ENCODE measurements at regions of chr1 and their contacts with region 1.

Region 1: GRCh38 chr1:110460253-110461220 is 9.6 kb downstream of the PROK1 start:
- DNase-seq: peak; percentile 62
- H3K4me3 ChIP-seq: no peak overlapping the region
- H3K27ac ChIP-seq: no peak overlapping the region
- H3K4me1 ChIP-seq: peaks cover 22% of the 10 kb centered on the region
- H3K27me3 ChIP-seq: no peaks in the 10 kb centered on the region
- CTCF ChIP-seq: peak; percentile 98 to 99

Region 2: DNA sequence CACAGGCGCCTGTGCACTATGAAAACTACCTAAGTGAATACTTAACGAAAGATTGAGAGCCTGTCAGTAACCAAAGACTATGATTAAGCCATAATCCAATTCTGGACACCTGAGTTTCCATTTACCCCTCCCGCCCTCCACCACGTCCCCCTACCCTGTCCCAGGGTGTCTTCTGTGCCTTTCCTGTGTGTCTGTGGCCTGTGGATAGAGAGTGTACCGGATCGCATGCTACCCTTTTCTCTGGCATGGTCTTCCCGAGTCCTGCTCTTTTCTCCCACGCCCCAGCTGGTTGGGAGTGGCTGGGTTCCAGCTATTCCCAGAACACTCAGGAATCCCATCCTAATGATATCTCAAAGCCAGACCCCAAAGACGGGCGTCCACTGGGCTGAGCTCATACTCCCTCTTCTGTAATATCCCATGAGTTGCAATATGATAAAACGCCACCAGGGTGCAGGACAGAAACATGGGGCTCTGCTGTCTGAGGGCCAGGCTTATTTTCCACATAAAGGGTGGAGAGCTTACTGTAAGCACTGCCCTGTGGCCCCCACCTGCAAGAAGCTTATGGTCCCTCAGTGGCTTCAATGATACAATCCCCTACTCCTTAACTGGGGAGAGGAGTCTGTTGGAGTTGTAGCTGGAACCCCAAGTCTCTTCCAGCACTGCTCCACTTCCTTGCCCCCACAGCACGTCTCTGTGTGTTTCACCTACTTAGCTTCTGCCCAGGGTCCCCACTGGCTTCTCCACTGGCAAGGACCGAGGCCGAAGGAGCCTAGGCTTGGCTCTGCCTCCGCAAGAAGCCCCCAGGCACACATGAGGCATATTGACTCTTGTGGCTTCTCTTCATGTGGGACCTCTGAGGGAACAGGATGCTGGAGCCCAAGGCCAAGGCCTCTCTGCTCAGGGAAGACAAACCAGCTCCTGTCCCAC is 372.5 kb before region 1 on chr1:
- CTCF ChIA-PET with region 1: no interaction called
- dilution Hi-C with region 1: no loop called
- in situ Hi-C with region 1: no loop called
- intact Hi-C with region 1: loop called (anchors 1 kb)
- DNase-seq: peak; percentile 31
- H3K4me3 ChIP-seq: no peak overlapping the region
- H3K27ac ChIP-seq: no peak overlapping the region
- H3K4me1 ChIP-seq: no peaks in the 10 kb centered on the region
- H3K27me3 ChIP-seq: peaks cover 22% of the 10 kb centered on the region
- CTCF ChIP-seq: peak; percentile 69

Region 3: DNA sequence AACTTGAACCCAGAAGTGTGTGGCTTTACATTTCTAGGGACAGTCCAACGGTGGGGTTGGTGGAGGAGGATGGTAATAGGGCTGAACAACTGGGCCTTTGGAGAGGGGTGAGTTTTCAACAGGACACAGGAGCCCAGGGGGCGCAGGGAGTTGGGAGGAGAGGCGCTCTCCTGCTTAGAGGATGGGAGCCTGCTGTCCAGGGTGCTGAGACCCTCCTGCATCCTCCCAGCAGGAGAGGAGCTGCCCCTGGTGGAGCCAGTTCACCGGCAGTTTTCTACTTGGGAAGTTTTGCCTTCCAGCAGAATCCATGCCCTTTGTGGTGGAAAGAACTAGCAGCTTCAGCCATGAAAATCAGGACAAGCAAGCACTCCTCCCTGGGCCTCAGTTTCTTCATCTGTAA is 241.8 kb before region 1 on chr1:
- CTCF ChIA-PET with region 1: no interaction called
- dilution Hi-C with region 1: no loop called
- in situ Hi-C with region 1: no loop called
- intact Hi-C with region 1: no loop called
- DNase-seq: no peak
- H3K4me3 ChIP-seq: no peak overlapping the region
- H3K27ac ChIP-seq: no peak overlapping the region
- H3K4me1 ChIP-seq: no peaks in the 10 kb centered on the region
- H3K27me3 ChIP-seq: no peaks in the 10 kb centered on the region
- CTCF ChIP-seq: no peak

Region 4: GRCh38 chr1:110312188-110313121 is 148.1 kb before region 1 on chr1:
- CTCF ChIA-PET with region 1: interaction called, 3 read pairs
- dilution Hi-C with region 1: no loop called
- in situ Hi-C with region 1: loop called in 1 of 2 experiments (anchors 10 kb)
- intact Hi-C with region 1: loop called (anchors 1 kb)
- DNase-seq: peak; percentile 49
- H3K4me3 ChIP-seq: no peak overlapping the region
- H3K27ac ChIP-seq: no peak overlapping the region
- H3K4me1 ChIP-seq: peaks cover 20% of the 10 kb centered on the region
- H3K27me3 ChIP-seq: no peaks in the 10 kb centered on the region
- CTCF ChIP-seq: peak; percentile 97 to 99

Region 5: DNA sequence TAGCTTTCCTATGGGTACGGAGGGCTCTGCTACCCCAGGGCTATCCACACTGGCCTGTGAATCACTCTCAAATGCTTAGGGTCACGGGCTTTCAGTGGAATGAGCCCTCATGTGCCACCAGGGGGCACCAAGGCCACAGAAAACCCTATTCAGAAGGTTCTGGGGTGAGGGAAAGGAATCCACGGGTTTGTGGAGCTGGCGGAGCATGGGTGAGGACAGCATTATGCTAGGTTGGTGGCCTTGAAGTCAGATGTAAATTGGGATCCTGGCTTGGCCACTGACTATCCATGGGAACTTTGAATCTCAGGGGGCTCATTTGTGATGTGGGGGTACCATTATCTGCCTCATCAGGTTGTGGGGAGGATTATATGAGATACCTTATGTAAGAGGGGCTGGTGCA is 48.0 kb before region 1 on chr1:
- CTCF ChIA-PET with region 1: interaction called, 7 read pairs
- dilution Hi-C with region 1: no loop called
- in situ Hi-C with region 1: no loop called
- intact Hi-C with region 1: loop called (anchors 1 kb)
- DNase-seq: peak; percentile 58
- H3K4me3 ChIP-seq: no peak overlapping the region
- H3K27ac ChIP-seq: no peak overlapping the region
- H3K4me1 ChIP-seq: no peaks in the 10 kb centered on the region
- H3K27me3 ChIP-seq: no peaks in the 10 kb centered on the region
- CTCF ChIP-seq: peak; percentile 63 to 89